ENCODE measurements at regions of chr7 and their contacts with region 1.

Region 1: DNA sequence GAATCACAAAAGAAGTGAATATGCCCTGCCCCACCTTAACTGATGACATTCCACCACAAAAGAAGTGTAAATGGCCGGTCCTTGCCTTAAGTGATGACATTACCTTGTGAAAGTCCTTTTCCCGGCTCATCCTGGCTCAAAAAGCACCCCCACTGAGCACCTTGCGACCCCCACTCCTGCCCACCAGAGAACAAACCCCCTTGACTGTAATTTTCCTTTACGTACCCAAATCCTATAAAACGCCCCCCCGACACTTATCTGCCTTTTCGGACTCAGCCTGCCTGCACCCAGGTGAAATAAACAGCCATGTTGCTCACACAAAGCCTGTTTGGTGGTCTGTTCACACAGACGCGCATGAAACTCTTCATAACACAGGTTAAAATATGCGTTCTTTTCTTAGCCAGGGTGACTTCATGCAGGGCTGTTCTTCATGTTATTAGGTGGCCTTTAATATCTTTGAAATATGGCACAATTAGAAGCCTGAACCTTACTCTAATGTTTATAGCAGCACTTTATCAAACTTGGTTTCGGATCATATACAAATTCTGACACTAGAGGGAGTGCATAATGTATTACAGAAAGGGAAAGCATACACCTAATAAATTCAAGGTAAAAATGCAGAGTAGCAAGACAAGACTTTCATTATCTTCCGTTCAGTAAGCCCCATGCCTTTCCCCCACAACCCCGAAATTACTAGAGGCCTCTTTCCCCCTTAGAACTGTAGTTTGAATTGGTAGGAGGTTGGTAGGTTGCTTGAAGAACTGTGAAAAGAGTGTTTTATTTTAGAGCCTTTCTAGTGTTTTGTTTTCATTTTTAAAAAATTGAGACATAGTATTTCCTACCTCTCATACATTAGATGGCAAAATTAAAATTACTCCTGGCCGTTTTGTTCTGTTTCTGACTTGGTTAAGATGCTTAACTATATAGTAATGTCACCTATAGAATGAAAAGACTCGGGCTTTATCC is 117.9 kb downstream of the NPY start:
- DNase-seq: no peak
- H3K4me3 ChIP-seq: peak overlapping the region; percentile 3 to 66 (median 56)
- H3K27ac ChIP-seq: no peak overlapping the region
- H3K4me1 ChIP-seq: peaks cover 2 to 28% (median 19%) of the 10 kb centered on the region in 4 experiments; a peak in 6 of 7 replicates
- H3K27me3 ChIP-seq: no peaks in the 10 kb centered on the region
- CTCF ChIP-seq: peak in 1 of 3 experiments; percentile 27; a peak in 1 of 4 replicates
- EP300 ChIP-seq: no peak
- POLR2A ChIP-seq: peak; percentile 16 to 38; a peak in 2 of 3 replicates
- RAD21 ChIP-seq: no peak; a peak in 1 of 4 replicates

Region 2: GRCh38 chr7:24318326-24318725 is 83.6 kb before region 1 on chr7:
- CTCF ChIA-PET with region 1: interaction called, 6 read pairs
- POLR2A ChIA-PET with region 1: interaction called, 10 read pairs
- DNase-seq: peak in 1 of 2 experiments; percentile 10
- H3K4me3 ChIP-seq: no peak overlapping the region
- H3K27ac ChIP-seq: no peak overlapping the region
- H3K4me1 ChIP-seq: peaks cover 0 to 6% (median 2%) of the 10 kb centered on the region in 4 experiments; a peak in 2 of 7 replicates
- H3K27me3 ChIP-seq: no peaks in the 10 kb centered on the region
- CTCF ChIP-seq: peak; percentile 75 to 94 (median 78)
- EP300 ChIP-seq: no peak
- POLR2A ChIP-seq: no peak
- RAD21 ChIP-seq: peak; percentile 96 to 97

Region 3: GRCh38 chr7:24419077-24419476 is 17.2 kb after region 1 on chr7:
- CTCF ChIA-PET with region 1: no interaction called
- POLR2A ChIA-PET with region 1: interaction called, 56 read pairs
- DNase-seq: no peak
- H3K4me3 ChIP-seq: no peak overlapping the region
- H3K27ac ChIP-seq: no peak overlapping the region
- H3K4me1 ChIP-seq: peaks cover 0 to 5% (median 0%) of the 10 kb centered on the region in 4 experiments; a peak in 1 of 7 replicates
- H3K27me3 ChIP-seq: peaks cover 0 to 2% (median 0%) of the 10 kb centered on the region in 4 experiments; a peak in 2 of 7 replicates
- CTCF ChIP-seq: no peak
- EP300 ChIP-seq: no peak
- POLR2A ChIP-seq: no peak
- RAD21 ChIP-seq: no peak

Region 4: DNA sequence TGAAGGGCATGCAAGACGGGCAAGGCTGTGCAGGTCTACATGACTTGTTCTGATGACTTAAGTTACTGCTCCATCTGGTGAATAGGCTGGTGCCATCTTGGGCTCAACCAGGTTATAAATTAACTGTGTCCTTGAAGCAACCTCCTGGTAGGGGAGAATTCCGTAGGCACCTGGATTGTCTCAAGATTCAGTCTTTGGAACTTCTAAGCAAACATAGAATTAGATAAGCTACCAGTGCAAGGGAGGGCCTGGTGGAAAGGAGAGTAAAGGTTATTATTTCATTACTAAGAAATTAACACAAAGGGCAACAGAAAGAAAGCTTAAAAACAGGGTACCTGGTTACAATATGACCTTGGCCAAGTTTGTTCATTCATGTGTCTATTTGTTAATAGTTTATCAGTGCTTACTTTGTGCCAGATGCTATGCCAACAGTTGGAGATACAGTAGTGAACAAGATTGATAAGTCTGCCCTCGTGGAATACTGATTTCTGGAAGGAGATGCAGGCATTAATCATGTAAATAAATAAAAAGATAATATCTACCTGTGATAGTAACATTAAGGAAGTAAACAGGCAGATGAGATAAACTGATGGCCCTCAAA is 64.4 kb after region 1 on chr7:
- CTCF ChIA-PET with region 1: no interaction called
- POLR2A ChIA-PET with region 1: interaction called, 20 read pairs
- DNase-seq: no peak
- H3K4me3 ChIP-seq: no peak overlapping the region
- H3K27ac ChIP-seq: no peak overlapping the region
- H3K4me1 ChIP-seq: no peaks in the 10 kb centered on the region; a peak in 1 of 7 replicates
- H3K27me3 ChIP-seq: no peaks in the 10 kb centered on the region
- CTCF ChIP-seq: no peak
- EP300 ChIP-seq: no peak
- POLR2A ChIP-seq: no peak
- RAD21 ChIP-seq: no peak